ENCODE measurements at regions of chr12 and their contacts with region 1.

Region 1: GRCh38 chr12:52192173-52192791 is 468 bp upstream of the KRT80 start:
- DNase-seq: no peak
- H3K4me3 ChIP-seq: no peak overlapping the region
- H3K27ac ChIP-seq: no peak overlapping the region
- H3K4me1 ChIP-seq: peaks cover 0 to 11% (median 6%) of the 10 kb centered on the region in 4 experiments; a peak in 4 of 7 replicates
- H3K27me3 ChIP-seq: no peaks in the 10 kb centered on the region
- CTCF ChIP-seq: no peak
- EP300 ChIP-seq: no peak
- POLR2A ChIP-seq: no peak
- RAD21 ChIP-seq: no peak

Region 2: DNA sequence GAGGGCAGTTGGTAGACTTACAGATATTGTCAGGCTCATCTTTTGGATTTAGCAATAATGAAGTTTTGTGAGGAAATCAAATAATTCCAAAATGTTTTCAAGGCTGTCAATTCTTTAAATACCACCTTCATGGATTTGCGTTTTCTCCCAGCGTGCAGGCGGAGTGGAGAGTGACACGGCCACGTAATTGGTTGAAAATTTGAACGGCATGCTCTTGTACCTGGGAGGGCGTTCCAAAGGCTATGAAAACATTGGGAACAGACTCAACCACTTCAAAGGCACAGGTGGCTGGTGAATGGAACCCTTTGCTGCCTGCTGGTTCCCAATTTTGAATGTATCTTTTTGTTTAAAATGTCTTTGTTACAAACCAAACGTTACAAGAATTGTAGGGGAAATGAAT is 100.4 kb before region 1 on chr12:
- CTCF ChIA-PET with region 1: no interaction called
- POLR2A ChIA-PET with region 1: no interaction called
- DNase-seq: no peak
- H3K4me3 ChIP-seq: no peak overlapping the region
- H3K27ac ChIP-seq: no peak overlapping the region
- H3K4me1 ChIP-seq: no peaks in the 10 kb centered on the region
- H3K27me3 ChIP-seq: no peaks in the 10 kb centered on the region
- CTCF ChIP-seq: no peak
- EP300 ChIP-seq: no peak
- POLR2A ChIP-seq: no peak
- RAD21 ChIP-seq: no peak

Region 3: GRCh38 chr12:52171950-52172512 is 20.3 kb before region 1 on chr12:
- CTCF ChIA-PET with region 1: interaction called, 16 read pairs
- POLR2A ChIA-PET with region 1: no interaction called
- DNase-seq: peak in 1 of 2 experiments; percentile 80
- H3K4me3 ChIP-seq: no peak overlapping the region
- H3K27ac ChIP-seq: no peak overlapping the region
- H3K4me1 ChIP-seq: peaks cover 0 to 2% (median 0%) of the 10 kb centered on the region in 4 experiments; a peak in 2 of 7 replicates
- H3K27me3 ChIP-seq: no peaks in the 10 kb centered on the region
- CTCF ChIP-seq: peak; percentile 79 to 86 (median 81)
- EP300 ChIP-seq: no peak
- POLR2A ChIP-seq: no peak
- RAD21 ChIP-seq: peak; percentile 47 to 67; a peak in 3 of 4 replicates